Testis (tissue), 5 donors: ENCODE measurements at regions of chr1 and their contacts with region 1.

Region 1: DNA sequence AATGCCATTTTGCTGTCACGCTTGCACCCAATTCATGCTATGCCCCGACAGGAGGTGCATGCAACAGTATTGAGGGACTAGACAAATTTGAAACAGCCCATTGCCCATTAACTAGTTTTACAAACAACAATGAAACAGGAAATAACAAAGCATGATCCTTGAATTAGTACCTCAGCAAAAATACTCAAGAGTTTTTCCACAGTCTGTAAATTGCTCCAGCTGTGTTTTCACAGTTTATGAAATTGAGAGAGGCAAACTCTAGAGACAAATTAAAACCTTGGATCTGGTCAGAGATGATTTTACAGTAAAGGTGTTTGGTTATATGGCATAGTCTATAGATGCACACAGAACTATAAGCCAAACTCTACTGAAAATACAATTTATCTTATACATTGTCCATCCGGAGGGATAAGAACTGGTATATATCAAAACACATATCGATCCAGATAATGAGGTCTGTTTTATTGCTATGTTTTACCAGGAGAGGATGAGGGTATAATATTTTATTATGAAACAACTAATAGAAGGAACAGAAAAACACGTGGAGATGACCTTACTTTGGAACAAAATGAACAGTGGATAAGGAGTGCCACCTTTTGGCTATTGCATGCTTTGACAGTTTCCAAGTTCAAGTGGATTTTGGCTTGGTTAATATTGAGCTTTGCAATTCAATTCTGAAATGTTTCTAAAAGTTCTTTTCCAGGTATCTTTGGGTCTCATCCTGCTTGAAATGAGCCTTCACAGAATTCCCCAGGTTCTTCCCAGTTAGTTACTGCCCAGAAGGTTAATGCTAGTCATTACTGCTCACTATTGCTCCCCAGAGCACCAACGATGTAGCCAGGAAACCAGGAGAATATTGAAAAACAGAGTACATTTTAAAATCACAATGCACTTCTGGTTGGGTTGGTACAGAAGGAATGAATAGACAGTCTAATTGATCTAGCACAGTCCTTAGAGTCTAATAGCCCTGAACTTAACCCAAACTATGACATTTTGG is 45.7 kb downstream of the ZC3H11B start:
- DNase-seq: no peak
- H3K4me3 ChIP-seq: no peak overlapping the region
- H3K27ac ChIP-seq: no peak overlapping the region
- H3K4me1 ChIP-seq: no peaks in the 10 kb centered on the region
- H3K27me3 ChIP-seq: no peaks in the 10 kb centered on the region
- CTCF ChIP-seq: peak in 2 of 3 experiments; percentile 27 to 43
- POLR2A ChIP-seq: no peak

Region 2: GRCh38 chr1:218330043-218330623 is 1237.1 kb before region 1 on chr1:
- intact Hi-C with region 1: loop called (anchors 10 kb)
- DNase-seq: no peak
- H3K4me3 ChIP-seq: no peak overlapping the region
- H3K27ac ChIP-seq: no peak overlapping the region
- H3K4me1 ChIP-seq: no peaks in the 10 kb centered on the region
- H3K27me3 ChIP-seq: no peaks in the 10 kb centered on the region
- CTCF ChIP-seq: peak; percentile 50 to 53 (median 51)
- POLR2A ChIP-seq: no peak

Region 3: GRCh38 chr1:219422811-219423598 is 144.2 kb before region 1 on chr1:
- intact Hi-C with region 1: no loop called
- DNase-seq: no peak
- H3K4me3 ChIP-seq: no peak overlapping the region
- H3K27ac ChIP-seq: no peak overlapping the region
- H3K4me1 ChIP-seq: no peaks in the 10 kb centered on the region
- H3K27me3 ChIP-seq: no peaks in the 10 kb centered on the region
- CTCF ChIP-seq: no peak
- POLR2A ChIP-seq: no peak

Region 4: DNA sequence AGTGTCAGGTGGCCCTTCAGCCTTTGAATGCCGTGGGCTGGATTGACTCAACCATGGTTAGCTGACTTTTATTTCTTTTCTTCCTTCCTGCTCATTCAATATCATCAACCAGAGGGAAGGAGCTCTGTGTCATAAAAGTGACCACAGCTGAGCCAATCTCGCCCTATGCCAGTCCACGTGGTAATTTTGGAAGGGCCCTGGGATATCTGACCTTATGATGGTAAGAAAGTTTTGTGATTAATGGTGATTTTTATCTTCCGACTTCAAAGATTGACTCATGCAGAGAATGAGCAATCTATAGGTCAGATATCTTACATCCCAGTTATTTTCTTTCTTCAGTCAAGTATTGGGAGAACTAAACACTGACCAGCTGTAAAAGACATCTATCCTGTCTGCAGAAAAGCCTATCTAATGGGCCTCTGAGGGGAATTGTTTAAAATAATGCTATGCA is 124.6 kb before region 1 on chr1:
- intact Hi-C with region 1: no loop called
- DNase-seq: no peak
- H3K4me3 ChIP-seq: no peak overlapping the region
- H3K27ac ChIP-seq: no peak overlapping the region
- H3K4me1 ChIP-seq: no peaks in the 10 kb centered on the region
- H3K27me3 ChIP-seq: no peaks in the 10 kb centered on the region
- CTCF ChIP-seq: no peak
- POLR2A ChIP-seq: no peak

Region 5: GRCh38 chr1:219476116-219476515 is 91.1 kb before region 1 on chr1:
- intact Hi-C with region 1: no loop called
- DNase-seq: no peak
- H3K4me3 ChIP-seq: no peak overlapping the region
- H3K27ac ChIP-seq: no peak overlapping the region
- H3K4me1 ChIP-seq: no peaks in the 10 kb centered on the region
- H3K27me3 ChIP-seq: no peaks in the 10 kb centered on the region
- CTCF ChIP-seq: no peak
- POLR2A ChIP-seq: no peak

Region 6: GRCh38 chr1:219682788-219683187 is 115.5 kb after region 1 on chr1:
- intact Hi-C with region 1: no loop called
- DNase-seq: no peak
- H3K4me3 ChIP-seq: no peak overlapping the region
- H3K27ac ChIP-seq: no peak overlapping the region
- H3K4me1 ChIP-seq: no peaks in the 10 kb centered on the region
- H3K27me3 ChIP-seq: no peaks in the 10 kb centered on the region
- CTCF ChIP-seq: no peak
- POLR2A ChIP-seq: no peak